Posterior vena cava (tissue), 2 donors: ENCODE measurements at regions of chr22 and their contacts with region 1.

Region 1: DNA sequence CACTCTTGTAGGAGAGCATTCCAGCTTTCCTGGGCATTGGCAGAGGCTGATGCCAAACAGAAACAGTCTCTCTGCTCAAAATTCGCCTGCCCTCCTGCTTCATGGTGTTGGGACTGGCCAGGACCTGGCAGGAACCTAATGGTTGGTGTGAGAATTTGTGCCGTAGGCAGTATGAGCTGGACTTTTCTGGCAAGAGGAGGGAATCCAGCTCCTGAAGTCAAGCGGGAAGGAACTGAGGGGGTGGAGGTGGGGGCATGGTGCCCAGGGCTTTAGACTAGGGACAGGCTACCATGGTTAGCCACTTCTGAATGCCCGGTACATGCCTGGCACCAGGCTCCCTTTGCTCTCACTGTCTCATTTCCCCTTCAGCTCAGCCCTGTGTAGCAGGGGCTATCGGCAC is 6.9 kb upstream of the TOMM22 start:
- DNase-seq: no peak

Region 2: DNA sequence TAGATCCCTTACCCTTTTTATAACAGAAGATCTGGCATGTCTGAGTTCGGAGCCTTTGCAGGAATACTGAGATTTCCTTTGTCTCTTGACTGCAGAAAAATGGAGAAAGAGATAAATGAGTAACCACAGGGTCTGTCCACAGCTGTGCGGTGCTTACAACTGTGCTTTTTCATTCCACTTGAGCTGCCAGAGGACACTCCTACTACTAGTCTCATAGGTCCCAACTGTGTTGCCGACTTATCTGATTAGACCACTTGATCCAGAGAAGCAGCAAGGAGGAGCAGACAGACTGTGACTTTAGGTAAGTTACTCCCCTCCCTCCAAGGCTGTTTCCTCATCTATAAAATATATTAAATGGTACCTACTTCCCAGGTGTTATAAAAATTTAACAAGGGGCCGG is 36.2 kb before region 1 on chr22:
- intact Hi-C with region 1: no loop called
- DNase-seq: no peak

Region 3: GRCh38 chr22:39508393-39508792 is 833.5 kb after region 1 on chr22:
- intact Hi-C with region 1: loop called in 1 of 2 experiments (anchors 5 kb)
- DNase-seq: no peak